Heart left ventricle (tissue), 16 donors: ENCODE measurements at regions of chr15 and their contacts with region 1.

Region 1: DNA sequence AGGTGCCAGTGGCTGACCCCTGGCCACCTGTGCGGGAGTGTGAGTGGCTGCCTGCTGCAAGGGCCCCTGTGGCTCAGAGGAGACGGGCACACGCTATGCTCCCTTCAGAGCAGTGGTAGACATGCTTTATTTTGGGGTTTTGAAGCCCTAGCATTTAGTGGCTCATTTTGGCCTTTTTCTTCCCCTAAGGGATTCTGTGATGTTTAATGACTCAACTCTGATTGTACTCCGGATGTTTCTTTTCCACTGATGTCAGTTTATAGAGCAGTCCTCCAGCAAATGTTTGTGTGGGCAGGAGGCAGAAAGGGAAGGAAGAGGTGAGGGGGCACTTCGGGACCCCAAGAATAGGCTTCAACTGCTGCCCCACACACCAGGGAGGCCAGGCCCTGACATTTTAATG is 288.9 kb upstream of the C2CD4B start:
- DNase-seq: no peak
- ATAC-seq: peak in 2 of 4 donors; percentile 4 to 15
- H3K4me3 ChIP-seq: no peak overlapping the region
- H3K27ac ChIP-seq: peak overlapping the region in 10 of 12 donors; percentile 25 to 84 (median 50)
- H3K4me1 ChIP-seq: peaks cover 3 to 66% (median 40%) of the 10 kb centered on the region in 12 donors
- H3K27me3 ChIP-seq: no peaks in the 10 kb centered on the region
- CTCF ChIP-seq: no peak
- POLR2A ChIP-seq: no peak

Region 2: DNA sequence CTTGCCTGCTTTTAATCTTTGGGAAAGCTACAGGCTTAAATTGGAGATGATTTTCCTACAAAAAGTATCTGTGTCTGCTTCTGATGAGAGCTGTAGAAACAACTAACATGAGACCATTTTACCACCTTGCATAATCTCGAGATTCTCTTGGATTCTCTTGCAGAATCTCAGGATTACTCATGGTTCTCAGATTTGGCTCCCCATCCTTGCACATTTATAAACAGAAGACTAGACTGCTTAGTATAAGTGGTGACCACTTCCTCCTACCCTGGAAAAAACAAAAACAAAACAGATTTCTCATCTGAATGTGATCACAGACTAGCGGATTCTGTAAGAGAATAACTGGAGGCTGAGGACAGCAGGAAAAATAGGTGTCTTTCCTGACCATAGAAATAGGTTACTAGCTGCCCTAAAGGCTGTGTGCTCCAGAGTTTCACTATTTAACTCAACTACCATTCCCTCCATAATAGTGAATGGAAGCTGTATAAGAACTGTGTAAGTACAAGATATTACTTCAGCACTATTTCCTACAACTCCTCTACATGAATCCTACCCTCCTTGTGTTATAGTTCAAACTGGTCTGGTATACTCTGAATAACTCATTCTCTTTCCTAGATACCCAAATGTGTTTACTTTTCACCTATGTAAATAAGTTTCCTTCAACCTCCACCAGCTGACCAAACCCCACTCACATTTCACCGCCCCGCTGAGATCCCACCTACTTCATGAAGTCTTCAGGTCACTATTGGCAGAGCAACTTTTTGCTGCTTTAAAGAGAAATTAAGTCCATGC is 166.7 kb before region 1 on chr15:
- intact Hi-C with region 1: no loop called
- DNase-seq: no peak
- ATAC-seq: no peak
- H3K4me3 ChIP-seq: no peak overlapping the region
- H3K27ac ChIP-seq: no peak overlapping the region
- H3K4me1 ChIP-seq: no peaks in the 10 kb centered on the region
- H3K27me3 ChIP-seq: peaks cover 0 to 36% (median 7%) of the 10 kb centered on the region in 9 donors
- CTCF ChIP-seq: no peak
- POLR2A ChIP-seq: no peak

Region 3: DNA sequence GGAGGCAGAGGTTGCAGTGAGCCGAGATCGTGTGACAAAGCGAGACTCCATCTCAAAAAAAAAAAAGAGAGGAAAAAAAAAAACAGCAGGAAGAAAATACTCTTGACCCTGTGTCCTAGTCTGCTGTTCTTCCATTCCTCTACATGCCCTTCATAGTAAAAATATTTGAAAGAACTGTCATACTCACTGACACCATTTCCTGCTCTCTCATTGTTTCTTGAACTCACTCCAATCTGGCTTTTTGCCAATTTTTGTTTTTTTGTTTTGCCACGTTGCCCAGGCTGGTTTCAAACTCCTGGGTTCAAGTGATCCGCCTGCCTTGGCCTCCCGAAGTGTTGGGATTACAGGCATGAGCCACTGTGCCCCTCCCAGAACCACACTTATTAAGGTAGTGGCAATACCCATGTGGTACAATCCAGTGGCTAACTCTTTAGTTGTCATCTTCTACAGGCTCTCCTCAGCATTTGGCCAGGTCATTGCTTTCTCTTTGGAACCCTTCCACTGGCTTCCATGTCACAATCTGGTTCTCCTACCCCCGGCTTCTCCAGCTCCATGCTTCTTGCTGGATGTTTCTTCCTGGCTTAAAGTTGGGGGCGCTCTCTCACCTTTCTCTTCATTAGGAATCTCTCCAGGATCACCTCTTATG is 50.7 kb before region 1 on chr15:
- intact Hi-C with region 1: loop called in 2 of 10 experiments (anchors 5 kb)
- DNase-seq: no peak
- ATAC-seq: peak; percentile 60 to 85 (median 74)
- H3K4me3 ChIP-seq: no peak overlapping the region
- H3K27ac ChIP-seq: peak overlapping the region in 2 of 12 donors; percentile 47 to 51
- H3K4me1 ChIP-seq: peaks cover 0 to 61% (median 20%) of the 10 kb centered on the region in 12 donors
- H3K27me3 ChIP-seq: no peaks in the 10 kb centered on the region
- CTCF ChIP-seq: no peak
- POLR2A ChIP-seq: no peak

Region 4: DNA sequence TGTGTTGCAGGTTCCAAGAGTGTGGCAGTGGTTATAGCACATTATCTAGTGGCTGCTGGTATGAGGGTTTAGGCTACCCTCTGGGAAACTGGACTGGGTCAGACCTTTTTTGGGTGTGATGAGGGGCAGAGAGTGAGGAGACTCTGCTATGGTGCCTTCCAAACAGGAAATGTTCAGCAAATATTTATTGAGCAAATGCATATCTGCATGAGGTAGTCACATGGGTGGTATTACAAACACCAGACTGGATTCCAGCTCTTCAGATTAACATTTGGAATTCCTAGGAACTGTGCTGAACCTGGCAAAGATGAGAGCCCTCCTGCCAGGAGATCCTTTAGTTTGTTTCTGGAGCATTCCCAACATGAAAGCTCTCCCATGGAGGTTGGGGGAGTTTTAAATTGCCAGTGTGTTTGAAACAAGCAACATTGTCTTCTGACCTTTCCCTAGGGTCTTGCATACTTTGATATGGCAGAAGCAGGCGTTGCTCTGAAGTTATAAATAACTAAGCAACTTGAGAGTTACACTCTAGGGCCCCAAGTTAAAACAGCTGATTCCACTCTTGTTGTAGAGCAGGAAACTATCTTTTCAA is 52.3 kb after region 1 on chr15:
- intact Hi-C with region 1: loop called in 2 of 10 experiments (anchors 1 to 5 kb)
- DNase-seq: peak in 1 of 5 donors; percentile 21
- ATAC-seq: peak; percentile 69 to 85 (median 74)
- H3K4me3 ChIP-seq: peak overlapping the region in 1 of 12 donors; percentile 16
- H3K27ac ChIP-seq: peak overlapping the region; percentile 54 to 90 (median 82)
- H3K4me1 ChIP-seq: peaks cover 0 to 74% (median 48%) of the 10 kb centered on the region in 12 donors
- H3K27me3 ChIP-seq: no peaks in the 10 kb centered on the region
- CTCF ChIP-seq: no peak
- POLR2A ChIP-seq: no peak

Region 5: GRCh38 chr15:62549345-62549970 is 95.5 kb after region 1 on chr15:
- intact Hi-C with region 1: loop called in 1 of 10 experiments (anchors 10 kb)
- DNase-seq: no peak
- ATAC-seq: no peak
- H3K4me3 ChIP-seq: no peak overlapping the region
- H3K27ac ChIP-seq: no peak overlapping the region
- H3K4me1 ChIP-seq: peaks cover 3 to 52% (median 32%) of the 10 kb centered on the region in 12 donors
- H3K27me3 ChIP-seq: no peaks in the 10 kb centered on the region
- CTCF ChIP-seq: peak; percentile 9 to 58 (median 31)
- POLR2A ChIP-seq: no peak

Region 6: DNA sequence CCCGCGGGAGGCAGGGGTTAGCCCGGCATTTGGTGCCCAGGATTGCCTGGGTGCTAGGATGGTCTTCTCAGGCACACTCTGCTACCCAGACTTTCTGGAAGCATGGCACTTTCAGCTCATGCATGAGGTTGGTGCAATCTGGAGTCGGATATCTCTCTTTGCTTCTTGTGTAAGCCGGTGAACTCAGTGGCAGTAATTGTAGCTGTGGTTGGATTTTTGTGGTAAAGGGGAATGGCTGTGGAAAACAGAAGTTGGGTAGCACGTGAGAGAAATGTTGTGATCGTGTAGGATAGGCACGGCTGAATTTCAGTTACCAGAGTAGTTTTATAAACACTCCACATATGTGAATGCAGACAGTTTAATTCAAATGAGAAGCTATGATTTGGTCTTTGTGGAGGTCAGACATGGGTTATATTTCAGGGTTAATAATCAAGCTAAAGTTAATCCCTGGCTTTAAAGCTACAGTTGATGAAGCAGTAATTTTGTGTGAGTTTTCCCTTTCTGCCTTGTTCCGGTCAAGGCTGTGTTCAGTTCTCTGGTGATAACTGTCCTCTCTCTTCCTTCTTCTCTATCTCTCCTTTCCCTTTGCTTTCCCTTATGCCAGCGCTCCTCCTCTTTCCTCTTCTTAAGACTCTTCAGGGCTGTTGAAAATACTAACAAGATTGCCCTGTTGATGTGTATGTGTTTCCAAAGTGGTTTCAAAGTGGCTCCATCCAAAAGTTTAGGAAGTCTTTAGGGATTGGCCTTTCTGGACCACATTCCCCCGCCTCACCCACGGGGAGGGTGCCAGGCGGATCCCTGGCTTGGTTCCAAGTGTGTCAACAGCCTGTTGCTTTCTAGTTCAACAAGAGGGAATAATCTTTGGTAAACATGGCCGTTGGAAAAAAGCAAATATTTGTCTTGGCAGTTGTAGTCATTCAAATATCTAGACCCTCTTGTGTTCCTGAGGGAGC is 115.8 kb after region 1 on chr15:
- intact Hi-C with region 1: no loop called
- DNase-seq: peak; percentile 39 to 74 (median 68)
- ATAC-seq: peak in 3 of 4 donors; percentile 31 to 61 (median 32)
- H3K4me3 ChIP-seq: no peak overlapping the region
- H3K27ac ChIP-seq: peak overlapping the region in 3 of 12 donors; percentile 1 to 9 (median 1)
- H3K4me1 ChIP-seq: peaks cover 0 to 34% (median 15%) of the 10 kb centered on the region in 12 donors
- H3K27me3 ChIP-seq: no peaks in the 10 kb centered on the region
- CTCF ChIP-seq: no peak
- POLR2A ChIP-seq: no peak

Region 7: DNA sequence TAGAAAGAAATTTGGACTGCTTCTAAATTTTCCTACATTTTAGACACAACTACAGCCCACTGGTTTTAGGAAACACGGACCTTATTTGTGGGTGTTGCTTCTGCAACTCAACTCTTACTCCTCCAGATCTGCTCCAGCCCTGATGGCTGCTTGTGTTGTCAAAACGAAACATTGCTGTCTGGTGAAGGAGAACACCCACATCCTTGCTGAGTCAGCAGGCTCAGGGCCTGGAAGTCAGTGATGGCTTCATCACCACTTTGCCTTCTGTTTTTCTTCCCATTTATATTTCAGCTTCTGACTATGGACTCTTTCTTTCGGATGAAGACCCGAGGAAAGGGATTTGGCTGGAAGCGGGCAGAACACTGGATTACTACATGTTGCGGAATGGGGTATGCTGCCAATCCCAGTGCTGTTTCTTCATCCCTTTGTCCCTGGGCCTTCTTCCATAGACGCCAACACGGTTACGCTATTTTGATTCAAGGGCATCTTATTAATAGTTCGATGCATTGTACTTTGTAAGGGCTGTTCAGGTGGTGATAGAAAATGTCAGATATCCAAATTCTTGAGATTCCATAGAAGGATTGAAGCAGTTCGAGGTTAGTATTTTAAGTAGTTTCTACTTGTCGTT is 195.9 kb after region 1 on chr15:
- intact Hi-C with region 1: loop called in 1 of 10 experiments (anchors 10 kb)
- DNase-seq: peak in 3 of 5 donors; percentile 36 to 58 (median 56)
- ATAC-seq: peak in 3 of 4 donors; percentile 57 to 83 (median 77)
- H3K4me3 ChIP-seq: no peak overlapping the region
- H3K27ac ChIP-seq: peak overlapping the region in 9 of 12 donors; percentile 7 to 69 (median 32)
- H3K4me1 ChIP-seq: peaks cover 0 to 47% (median 0%) of the 10 kb centered on the region in 12 donors
- H3K27me3 ChIP-seq: no peaks in the 10 kb centered on the region
- CTCF ChIP-seq: no peak
- POLR2A ChIP-seq: no peak

Region 8: DNA sequence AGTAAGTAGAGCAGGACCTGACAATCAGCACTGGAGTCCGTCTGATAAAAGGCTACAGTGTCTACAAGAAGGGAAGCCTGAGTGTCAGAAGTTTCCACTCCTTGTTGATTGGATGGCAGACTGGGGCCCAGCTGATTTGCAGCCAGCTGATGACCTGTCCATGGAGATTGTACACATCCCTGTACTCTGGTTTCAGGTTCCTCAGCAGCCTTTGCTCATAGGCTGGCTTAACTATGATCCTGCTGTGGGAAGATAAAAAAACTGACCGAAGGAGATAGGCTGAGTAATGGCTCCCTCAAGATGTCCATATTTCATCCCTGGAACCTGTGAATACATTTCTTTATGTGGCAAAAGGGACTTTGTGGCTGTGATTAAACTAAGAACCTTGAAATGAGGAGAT is 655.9 kb after region 1 on chr15:
- intact Hi-C with region 1: loop called in 1 of 10 experiments (anchors 10 kb)
- DNase-seq: no peak
- ATAC-seq: no peak
- H3K4me3 ChIP-seq: no peak overlapping the region
- H3K27ac ChIP-seq: no peak overlapping the region
- H3K4me1 ChIP-seq: peaks cover 0 to 7% (median 0%) of the 10 kb centered on the region in 12 donors
- H3K27me3 ChIP-seq: no peaks in the 10 kb centered on the region
- CTCF ChIP-seq: no peak
- POLR2A ChIP-seq: no peak